SK-N-SH (cell line): ENCODE measurements at regions of chr19 and their contacts with region 1.

Region 1: GRCh38 chr19:18000935-18001778 is 6.8 kb upstream of the ARRDC2 start:
- DNase-seq: peak; percentile 92
- H3K4me3 ChIP-seq: peak overlapping the region; percentile 63 to 78
- H3K27ac ChIP-seq: peak overlapping the region in 1 of 2 experiments; percentile 24; a peak in 1 of 4 replicates
- H3K4me1 ChIP-seq: peaks cover 0 to 4% of the 10 kb centered on the region in 2 experiments; a peak in 1 of 4 replicates
- H3K27me3 ChIP-seq: no peaks in the 10 kb centered on the region
- CTCF ChIP-seq: no peak
- EP300 ChIP-seq: no peak
- RAD21 ChIP-seq: no peak

Region 2: DNA sequence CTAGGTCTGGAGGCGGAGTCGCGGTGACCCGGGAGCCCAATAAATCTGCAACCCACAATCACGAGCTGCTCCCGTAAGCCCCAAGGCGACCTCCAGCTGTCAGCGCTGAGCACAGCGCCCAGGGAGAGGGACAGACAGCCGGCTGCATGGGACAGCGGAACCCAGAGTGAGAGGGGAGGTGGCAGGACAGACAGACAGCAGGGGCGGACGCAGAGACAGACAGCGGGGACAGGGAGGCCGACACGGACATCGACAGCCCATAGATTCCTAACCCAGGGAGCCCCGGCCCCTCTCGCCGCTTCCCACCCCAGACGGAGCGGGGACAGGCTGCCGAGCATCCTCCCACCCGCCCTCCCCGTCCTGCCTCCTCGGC is 129.3 kb before region 1 on chr19 and contains the start of gene SLC5A5:
- CTCF ChIA-PET with region 1: interaction called, 26 read pairs
- POLR2A ChIA-PET with region 1: no interaction called
- DNase-seq: peak; percentile 64
- H3K4me3 ChIP-seq: no peak within 1 kb of the TSS
- H3K27ac ChIP-seq: no peak within 1 kb of the TSS
- H3K4me1 ChIP-seq: peaks cover 0 to 5% of the 10 kb centered on the region in 2 experiments; a peak in 1 of 4 replicates
- H3K27me3 ChIP-seq: peaks cover 25% of the 10 kb centered on the region
- CTCF ChIP-seq: no peak
- EP300 ChIP-seq: no peak
- RAD21 ChIP-seq: no peak
- polyA plus RNA-seq, gene SLC5A5: 0.02 TPM in 2 replicates

Region 3: DNA sequence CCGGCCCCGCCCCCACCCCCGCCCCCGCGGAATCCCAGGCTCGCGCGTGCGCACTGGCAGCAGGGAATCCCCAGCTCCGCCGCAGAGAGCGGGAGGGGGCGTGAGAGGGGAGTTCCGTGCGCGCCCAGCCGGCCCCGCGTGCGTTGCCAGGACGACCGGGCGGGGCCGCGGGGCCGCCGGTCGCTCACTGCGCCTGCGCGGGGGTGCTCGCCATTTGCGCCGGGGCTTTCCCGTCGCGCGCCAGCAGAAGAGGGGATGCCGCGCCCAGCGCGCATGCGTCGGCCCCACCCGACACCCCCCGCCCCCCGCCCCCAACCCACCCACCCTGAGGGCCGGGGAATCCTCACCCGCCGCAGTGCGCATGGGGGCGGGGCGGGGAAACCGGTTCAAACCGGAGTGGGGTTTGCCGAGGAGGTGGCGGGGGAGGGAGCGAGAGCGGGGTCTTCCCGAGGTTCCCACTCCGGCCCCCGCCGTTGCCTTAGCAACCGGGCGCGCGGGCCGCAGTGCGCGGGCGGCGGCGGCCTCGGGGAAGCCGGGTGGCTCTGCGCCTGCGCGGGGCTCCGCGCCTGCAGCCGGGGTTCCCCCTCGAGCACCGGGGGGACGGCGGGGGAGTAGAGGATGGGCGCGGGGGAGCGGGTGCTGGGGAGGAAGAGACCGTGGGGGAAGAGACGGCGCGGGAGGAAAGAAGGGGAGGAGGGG is 53.2 kb before region 1 on chr19:
- CTCF ChIA-PET with region 1: interaction called, 464 read pairs
- POLR2A ChIA-PET with region 1: no interaction called
- DNase-seq: peak; percentile 99
- H3K4me3 ChIP-seq: peak overlapping the region; percentile 49 to 59
- H3K27ac ChIP-seq: no peak overlapping the region; a peak in 1 of 4 replicates
- H3K4me1 ChIP-seq: peaks cover 11 to 22% of the 10 kb centered on the region in 2 experiments; a peak in 2 of 4 replicates
- H3K27me3 ChIP-seq: peaks cover 30% of the 10 kb centered on the region
- CTCF ChIP-seq: no peak
- EP300 ChIP-seq: 0 out of 4 replicates have a peak, but pooled peaks of 1 of the 2 experiments have one; percentile 13
- RAD21 ChIP-seq: no peak

Region 4: GRCh38 chr19:17966550-17967256 is 34.5 kb before region 1 on chr19 and contains the start of gene KCNN1:
- CTCF ChIA-PET with region 1: interaction called, 41 read pairs
- POLR2A ChIA-PET with region 1: no interaction called
- DNase-seq: peak; percentile 98
- H3K4me3 ChIP-seq: peak within 1 kb of the TSS; percentile 67 to 68
- H3K27ac ChIP-seq: no peak within 1 kb of the TSS
- H3K4me1 ChIP-seq: peaks cover 0 to 13% of the 10 kb centered on the region in 2 experiments; a peak in 2 of 4 replicates
- H3K27me3 ChIP-seq: 0 out of 2 replicates have a peak, but pooled peaks cover 4% of the 10 kb centered on the region
- CTCF ChIP-seq: no peak
- EP300 ChIP-seq: no peak
- RAD21 ChIP-seq: no peak
- polyA plus RNA-seq, gene KCNN1: 2.7 and 3.6 TPM in 2 replicates

Region 5: GRCh38 chr19:17973759-17974158 is 27.4 kb before region 1 on chr19:
- CTCF ChIA-PET with region 1: interaction called, 41 read pairs
- POLR2A ChIA-PET with region 1: no interaction called
- DNase-seq: no peak
- H3K4me3 ChIP-seq: no peak overlapping the region
- H3K27ac ChIP-seq: no peak overlapping the region
- H3K4me1 ChIP-seq: no peaks in the 10 kb centered on the region
- H3K27me3 ChIP-seq: no peaks in the 10 kb centered on the region
- CTCF ChIP-seq: no peak
- EP300 ChIP-seq: no peak
- RAD21 ChIP-seq: no peak

Region 6: DNA sequence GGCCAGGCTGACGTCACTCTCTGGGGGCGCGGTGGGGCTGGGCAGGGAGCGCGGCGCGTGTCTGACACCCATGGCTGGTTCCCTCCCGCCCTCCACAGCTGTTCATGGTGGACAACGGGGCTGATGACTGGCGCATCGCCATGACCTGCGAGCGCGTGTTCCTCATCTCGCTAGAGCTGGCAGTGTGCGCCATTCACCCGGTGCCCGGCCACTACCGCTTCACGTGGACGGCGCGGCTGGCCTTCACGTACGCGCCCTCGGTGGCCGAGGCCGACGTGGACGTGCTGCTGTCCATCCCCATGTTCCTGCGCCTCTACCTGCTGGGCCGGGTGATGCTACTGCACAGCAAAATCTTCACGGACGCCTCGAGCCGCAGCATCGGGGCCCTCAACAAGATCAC is 19.5 kb before region 1 on chr19:
- CTCF ChIA-PET with region 1: interaction called, 12 read pairs
- POLR2A ChIA-PET with region 1: no interaction called
- DNase-seq: no peak
- H3K4me3 ChIP-seq: no peak overlapping the region
- H3K27ac ChIP-seq: no peak overlapping the region
- H3K4me1 ChIP-seq: no peaks in the 10 kb centered on the region
- H3K27me3 ChIP-seq: no peaks in the 10 kb centered on the region
- CTCF ChIP-seq: no peak
- EP300 ChIP-seq: no peak
- RAD21 ChIP-seq: no peak

Region 7: GRCh38 chr19:18058208-18059030 is 57.3 kb after region 1 on chr19:
- CTCF ChIA-PET with region 1: interaction called, 118 read pairs
- POLR2A ChIA-PET with region 1: no interaction called
- DNase-seq: peak; percentile 94
- H3K4me3 ChIP-seq: peak overlapping the region; percentile 24 to 51; a peak in 2 of 4 replicates
- H3K27ac ChIP-seq: peak overlapping the region in 1 of 2 experiments; percentile 48; a peak in 2 of 4 replicates
- H3K4me1 ChIP-seq: peaks cover 3 to 5% of the 10 kb centered on the region in 2 experiments; a peak in 2 of 4 replicates
- H3K27me3 ChIP-seq: no peaks in the 10 kb centered on the region
- CTCF ChIP-seq: peak; percentile 97
- EP300 ChIP-seq: no peak
- RAD21 ChIP-seq: peak; percentile 88

Region 8: DNA sequence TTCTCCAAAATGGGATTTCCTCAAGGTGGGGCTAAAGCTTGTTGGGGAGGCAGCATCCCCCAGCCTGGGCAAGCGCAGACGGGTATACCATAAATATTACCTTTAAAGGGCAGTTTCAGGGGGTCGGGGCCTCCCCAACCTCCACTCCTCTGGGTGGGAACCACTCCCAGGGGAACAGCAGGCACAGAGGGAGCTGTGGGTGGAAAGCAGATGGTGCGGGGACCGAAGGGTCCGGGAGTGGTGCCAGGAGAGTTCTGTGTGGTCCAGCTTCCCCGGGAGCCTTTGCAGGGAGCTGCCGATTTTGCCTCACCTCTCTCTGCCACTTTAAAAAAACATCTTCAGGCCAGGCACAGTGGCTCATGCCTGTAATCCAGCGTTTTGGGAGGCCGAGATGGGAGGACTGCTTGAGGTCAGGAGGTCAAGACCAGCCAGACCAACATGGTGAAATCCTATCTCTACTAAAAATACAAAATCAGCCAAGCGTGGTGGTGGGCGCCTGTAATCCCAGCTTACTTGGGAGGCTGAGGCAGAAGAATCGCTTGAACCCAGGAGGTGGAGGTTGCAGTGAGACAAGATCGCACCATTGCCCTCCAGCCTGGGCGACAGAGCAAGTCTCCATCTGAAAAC is 101.9 kb after region 1 on chr19:
- CTCF ChIA-PET with region 1: no interaction called
- POLR2A ChIA-PET with region 1: no interaction called
- DNase-seq: no peak
- H3K4me3 ChIP-seq: no peak overlapping the region
- H3K27ac ChIP-seq: no peak overlapping the region
- H3K4me1 ChIP-seq: peaks cover 4 to 16% of the 10 kb centered on the region in 2 experiments; a peak in 2 of 4 replicates
- H3K27me3 ChIP-seq: no peaks in the 10 kb centered on the region
- CTCF ChIP-seq: no peak
- EP300 ChIP-seq: no peak
- RAD21 ChIP-seq: no peak